Endothelial cell of umbilical vein (primary cell): ENCODE measurements at regions of chr18 and their contacts with region 1.

Region 1: DNA sequence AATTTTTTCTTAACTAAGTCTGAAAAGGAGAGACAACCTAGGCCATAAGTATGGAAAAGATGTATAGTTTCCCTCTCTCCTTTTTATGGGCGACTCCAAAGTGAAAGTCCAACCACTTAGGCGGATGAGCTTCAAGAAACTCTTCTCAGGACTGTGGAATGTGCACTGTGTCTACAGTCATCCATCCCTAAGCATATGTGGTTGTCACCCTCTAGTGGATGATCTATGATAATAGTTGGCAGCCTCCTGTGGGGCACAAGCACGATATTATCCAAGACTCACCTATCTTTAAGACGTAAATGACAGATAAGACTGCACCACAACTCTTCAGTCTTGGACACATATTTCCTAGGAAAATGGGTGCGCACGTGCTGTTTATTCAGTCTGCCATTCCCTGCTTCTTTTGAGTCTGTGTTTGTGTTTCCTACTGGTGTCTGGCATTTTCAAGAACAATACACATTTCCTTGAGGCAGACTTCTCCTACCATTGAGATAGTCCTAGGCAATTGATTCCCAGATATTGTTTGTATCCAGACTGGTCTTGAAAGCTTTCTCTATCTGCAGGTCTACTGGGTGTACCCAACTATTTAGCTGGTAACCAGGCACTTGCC is 145.5 kb upstream of the CTAGE1 start:
- DNase-seq: peak; percentile 95
- H3K4me3 ChIP-seq: peak overlapping the region in 2 of 3 experiments; percentile 3 to 47
- H3K27ac ChIP-seq: peak overlapping the region; percentile 59
- H3K4me1 ChIP-seq: peaks cover 41% of the 10 kb centered on the region
- H3K27me3 ChIP-seq: no peaks in the 10 kb centered on the region
- CTCF ChIP-seq: peak; percentile 60 to 68
- POLR2A ChIP-seq: no peak

Region 2: DNA sequence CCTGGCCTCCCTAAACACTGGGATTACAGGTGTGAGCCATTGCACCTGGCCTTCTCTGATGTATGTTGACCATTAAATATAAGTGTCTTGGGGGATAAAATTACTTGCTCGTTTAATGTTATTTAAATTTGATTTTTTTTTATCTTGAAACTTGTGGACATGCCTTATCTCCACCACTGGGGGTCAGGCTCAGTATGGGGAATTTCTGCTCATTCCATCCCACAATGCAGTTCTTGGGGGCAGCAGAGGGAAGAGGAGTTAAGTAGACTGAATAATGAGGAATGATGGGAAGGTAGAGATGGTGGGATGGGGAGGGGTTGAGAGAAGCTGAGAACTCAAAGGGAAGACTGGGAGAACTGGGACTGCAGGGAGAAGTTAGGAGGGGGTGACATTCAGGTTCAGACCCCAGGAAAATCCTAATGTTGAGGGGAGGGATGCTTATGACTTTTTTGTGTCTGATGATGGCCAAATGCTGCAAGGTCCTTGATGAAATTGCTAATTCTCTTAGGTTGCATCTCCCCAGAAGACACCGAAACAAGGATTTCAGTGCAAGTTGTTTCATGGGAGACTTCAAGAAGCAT is 648.4 kb before region 1 on chr18:
- CTCF ChIA-PET with region 1: interaction called, 7 read pairs
- POLR2A ChIA-PET with region 1: no interaction called
- dilution Hi-C with region 1: no loop called
- intact Hi-C with region 1: loop called (anchors 1 kb)
- DNase-seq: peak; percentile 81
- H3K4me3 ChIP-seq: no peak overlapping the region
- H3K27ac ChIP-seq: no peak overlapping the region
- H3K4me1 ChIP-seq: no peaks in the 10 kb centered on the region
- H3K27me3 ChIP-seq: peaks cover 4% of the 10 kb centered on the region in 2 experiments
- CTCF ChIP-seq: peak; percentile 63 to 66
- POLR2A ChIP-seq: no peak

Region 3: DNA sequence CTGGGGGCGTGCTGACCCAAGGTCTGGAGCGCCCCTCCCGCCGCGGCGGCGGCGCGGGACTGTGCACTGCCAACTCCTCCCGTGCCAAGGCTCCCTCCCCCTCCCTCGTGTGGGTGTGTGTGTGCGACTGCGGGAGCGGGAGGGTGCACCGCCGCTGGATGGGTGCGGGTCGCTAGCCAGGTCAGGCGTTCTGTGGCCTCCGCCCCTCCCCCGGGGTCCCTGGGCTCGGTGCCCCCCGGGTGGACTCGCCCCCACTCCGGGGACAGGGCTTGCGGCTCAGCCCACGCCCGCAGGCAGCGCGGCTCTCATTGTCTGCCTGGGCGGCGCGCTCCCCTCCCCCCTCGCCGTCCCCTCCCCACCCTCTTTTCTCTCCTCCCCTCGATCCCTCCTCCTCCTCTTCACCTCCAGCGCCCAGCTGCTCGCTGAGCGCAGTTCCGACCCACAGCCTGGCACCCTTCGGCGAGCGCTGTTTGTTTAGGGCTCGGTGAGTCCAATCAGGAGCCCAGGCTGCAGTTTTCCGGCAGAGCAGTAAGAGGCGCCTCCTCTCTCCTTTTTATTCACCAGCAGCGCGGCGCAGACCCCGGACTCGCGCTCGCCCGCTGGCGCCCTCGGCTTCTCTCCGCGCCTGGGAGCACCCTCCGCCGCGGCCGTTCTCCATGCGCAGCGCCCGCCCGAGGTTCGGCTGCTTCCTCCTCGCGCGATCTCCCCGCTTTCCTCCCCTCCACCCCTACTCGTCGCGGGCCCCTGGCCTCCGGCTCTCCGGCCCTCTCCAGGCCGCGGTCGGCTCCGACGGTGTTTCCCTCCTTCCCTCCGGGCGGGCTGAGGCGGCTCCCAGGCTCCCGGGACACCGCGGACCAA is 394.0 kb before region 1 on chr18 and contains the start of gene GATA6:
- CTCF ChIA-PET with region 1: interaction called, 144 read pairs
- POLR2A ChIA-PET with region 1: interaction called, 6 read pairs
- dilution Hi-C with region 1: loop called (anchors 10 kb)
- intact Hi-C with region 1: loop called (anchors 1 kb)
- DNase-seq: peak; percentile 95
- H3K4me3 ChIP-seq: peak within 1 kb of the TSS; percentile 83 to 86 (median 83)
- H3K27ac ChIP-seq: peak within 1 kb of the TSS; percentile 87
- H3K4me1 ChIP-seq: peaks cover 33% of the 10 kb centered on the region
- H3K27me3 ChIP-seq: peaks cover 28 to 42% of the 10 kb centered on the region in 2 experiments
- CTCF ChIP-seq: peak; percentile 14 to 63
- POLR2A ChIP-seq: peak; percentile 91
- total RNA-seq, gene GATA6: 14.6 and 14.9 TPM in 2 replicates

Region 4: GRCh38 chr18:22282311-22283112 is 280.7 kb before region 1 on chr18:
- CTCF ChIA-PET with region 1: interaction called, 4 read pairs
- POLR2A ChIA-PET with region 1: no interaction called
- dilution Hi-C with region 1: no loop called
- intact Hi-C with region 1: loop called (anchors 1 kb)
- DNase-seq: peak; percentile 96
- H3K4me3 ChIP-seq: no peak overlapping the region
- H3K27ac ChIP-seq: peak overlapping the region; percentile 93
- H3K4me1 ChIP-seq: peaks cover 20% of the 10 kb centered on the region
- H3K27me3 ChIP-seq: no peaks in the 10 kb centered on the region
- CTCF ChIP-seq: peak in 1 of 2 donors; percentile 15
- POLR2A ChIP-seq: no peak

Region 5: DNA sequence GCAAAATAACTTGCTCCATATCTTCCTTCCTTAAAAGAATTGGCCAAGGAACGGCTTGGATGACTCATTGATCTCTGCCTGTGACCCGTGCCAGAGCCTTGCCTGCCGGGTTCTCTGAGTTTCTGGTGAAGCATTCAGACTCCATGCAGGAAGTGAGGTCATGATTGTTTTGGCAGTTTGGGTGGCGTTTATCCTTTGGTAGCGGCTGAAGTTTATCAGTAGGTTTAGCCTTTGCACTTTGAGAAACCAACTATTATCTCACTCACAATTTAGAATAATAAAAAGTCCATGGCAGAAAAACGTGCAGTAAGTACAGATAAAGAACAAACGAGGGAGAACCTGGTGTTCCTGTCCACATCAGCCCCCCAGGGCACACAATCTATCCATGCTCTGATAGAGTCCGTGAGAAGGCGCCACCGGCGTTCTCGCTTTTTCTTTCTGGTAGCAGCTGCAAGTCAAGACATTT is 130.5 kb before region 1 on chr18:
- CTCF ChIA-PET with region 1: no interaction called
- POLR2A ChIA-PET with region 1: no interaction called
- dilution Hi-C with region 1: no loop called
- intact Hi-C with region 1: loop called (anchors 1 kb)
- DNase-seq: peak; percentile 93
- H3K4me3 ChIP-seq: no peak overlapping the region
- H3K27ac ChIP-seq: peak overlapping the region; percentile 67
- H3K4me1 ChIP-seq: peaks cover 25% of the 10 kb centered on the region
- H3K27me3 ChIP-seq: no peaks in the 10 kb centered on the region
- CTCF ChIP-seq: no peak
- POLR2A ChIP-seq: peak; percentile 46

Region 6: DNA sequence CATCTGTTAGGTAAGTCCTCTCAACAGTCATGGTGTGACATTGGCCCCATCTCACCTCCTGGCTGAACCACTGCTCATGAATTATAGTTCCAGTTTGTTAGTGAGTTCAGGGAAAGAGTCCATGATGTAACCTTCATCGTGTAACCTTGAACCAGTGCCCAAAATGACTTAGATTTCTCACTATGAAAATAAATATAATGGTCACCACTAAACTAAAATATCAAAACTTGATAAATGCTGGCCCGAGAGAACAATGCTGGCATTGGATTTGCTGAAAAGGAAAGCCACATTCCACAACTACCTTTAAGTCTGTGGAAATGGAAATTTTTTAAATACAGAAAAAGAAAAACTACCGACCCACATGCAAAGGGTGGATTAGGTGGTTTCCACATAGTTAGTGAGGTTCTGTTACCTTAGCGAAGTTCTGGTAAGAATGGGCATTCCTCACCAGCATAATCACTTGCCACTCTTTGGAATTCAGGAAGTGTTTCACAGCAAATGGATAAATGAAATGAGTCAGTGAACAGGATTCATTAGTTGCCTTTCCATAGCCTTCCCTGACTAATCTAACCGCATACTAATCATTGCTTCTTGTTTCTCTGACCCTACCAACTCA is 11.6 kb before region 1 on chr18:
- CTCF ChIA-PET with region 1: no interaction called
- POLR2A ChIA-PET with region 1: no interaction called
- dilution Hi-C with region 1: no loop called
- intact Hi-C with region 1: loop called (anchors 1 kb)
- DNase-seq: peak; percentile 92
- H3K4me3 ChIP-seq: no peak overlapping the region
- H3K27ac ChIP-seq: peak overlapping the region; percentile 79
- H3K4me1 ChIP-seq: peaks cover 31% of the 10 kb centered on the region
- H3K27me3 ChIP-seq: no peaks in the 10 kb centered on the region
- CTCF ChIP-seq: no peak
- POLR2A ChIP-seq: peak; percentile 35

Region 7: DNA sequence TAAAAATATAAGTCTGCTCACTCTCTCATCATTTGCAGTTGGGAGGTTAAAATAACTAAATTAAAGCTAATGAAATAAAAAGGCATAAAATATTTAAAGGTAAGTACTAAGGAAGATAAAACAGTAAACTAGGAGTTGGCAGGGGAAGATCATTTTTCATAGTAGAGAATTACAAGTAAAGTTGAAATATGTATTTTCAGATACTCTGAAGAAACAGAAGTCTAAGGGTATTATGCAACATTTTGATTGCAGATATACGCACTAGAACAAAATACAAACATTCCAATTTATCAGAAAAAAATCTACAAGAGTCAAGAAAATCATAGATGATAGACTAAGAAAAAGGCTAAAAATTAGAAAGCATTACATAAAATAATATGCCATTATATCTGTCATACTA is 22.1 kb after region 1 on chr18:
- CTCF ChIA-PET with region 1: no interaction called
- POLR2A ChIA-PET with region 1: no interaction called
- dilution Hi-C with region 1: no loop called
- intact Hi-C with region 1: no loop called
- DNase-seq: no peak
- H3K4me3 ChIP-seq: no peak overlapping the region
- H3K27ac ChIP-seq: no peak overlapping the region
- H3K4me1 ChIP-seq: no peaks in the 10 kb centered on the region
- H3K27me3 ChIP-seq: peaks cover 0 to 2% of the 10 kb centered on the region in 2 experiments
- CTCF ChIP-seq: no peak
- POLR2A ChIP-seq: no peak

Region 8: GRCh38 chr18:22871809-22872525 is 308.8 kb after region 1 on chr18:
- CTCF ChIA-PET with region 1: no interaction called
- POLR2A ChIA-PET with region 1: no interaction called
- dilution Hi-C with region 1: no loop called
- intact Hi-C with region 1: no loop called
- DNase-seq: peak; percentile 49
- H3K4me3 ChIP-seq: no peak overlapping the region
- H3K27ac ChIP-seq: no peak overlapping the region
- H3K4me1 ChIP-seq: no peaks in the 10 kb centered on the region
- H3K27me3 ChIP-seq: peaks cover 6% of the 10 kb centered on the region in 2 experiments
- CTCF ChIP-seq: no peak
- POLR2A ChIP-seq: no peak

Region 9: DNA sequence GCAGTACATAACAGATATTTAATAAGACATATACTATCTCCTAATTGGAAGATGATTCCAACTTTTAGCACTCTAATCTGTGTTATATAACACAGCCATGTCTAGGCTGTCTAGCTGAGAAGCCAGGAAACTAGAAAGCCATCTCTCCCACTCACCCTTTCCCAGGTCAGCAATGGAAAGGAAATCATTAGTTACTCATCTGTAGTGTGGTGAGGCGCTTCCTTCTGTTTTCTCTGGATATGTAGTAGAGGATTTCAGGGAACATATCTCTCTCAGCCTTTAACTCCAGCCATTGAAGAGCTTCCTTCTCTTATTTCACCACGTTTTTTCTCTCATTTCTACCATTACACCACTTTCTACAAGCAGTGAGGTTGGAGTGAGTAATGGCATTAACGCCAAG is 389.3 kb after region 1 on chr18:
- CTCF ChIA-PET with region 1: no interaction called
- POLR2A ChIA-PET with region 1: no interaction called
- dilution Hi-C with region 1: no loop called
- intact Hi-C with region 1: no loop called
- DNase-seq: peak; percentile 50
- H3K4me3 ChIP-seq: no peak overlapping the region
- H3K27ac ChIP-seq: no peak overlapping the region
- H3K4me1 ChIP-seq: peaks cover 16% of the 10 kb centered on the region
- H3K27me3 ChIP-seq: no peaks in the 10 kb centered on the region
- CTCF ChIP-seq: no peak
- POLR2A ChIP-seq: no peak